ENCODE measurements at regions of chr3 and their contacts with region 1.

Region 1: GRCh38 chr3:171703756-171704401 is 106.4 kb downstream of the PLD1 start:
- DNase-seq: no peak
- H3K4me3 ChIP-seq: no peak overlapping the region
- H3K27ac ChIP-seq: no peak overlapping the region
- H3K4me1 ChIP-seq: no peaks in the 10 kb centered on the region
- H3K27me3 ChIP-seq: no peaks in the 10 kb centered on the region
- CTCF ChIP-seq: peak in 1 of 4 experiments; percentile 25
- EP300 ChIP-seq: no peak
- POLR2A ChIP-seq: no peak

Region 2: DNA sequence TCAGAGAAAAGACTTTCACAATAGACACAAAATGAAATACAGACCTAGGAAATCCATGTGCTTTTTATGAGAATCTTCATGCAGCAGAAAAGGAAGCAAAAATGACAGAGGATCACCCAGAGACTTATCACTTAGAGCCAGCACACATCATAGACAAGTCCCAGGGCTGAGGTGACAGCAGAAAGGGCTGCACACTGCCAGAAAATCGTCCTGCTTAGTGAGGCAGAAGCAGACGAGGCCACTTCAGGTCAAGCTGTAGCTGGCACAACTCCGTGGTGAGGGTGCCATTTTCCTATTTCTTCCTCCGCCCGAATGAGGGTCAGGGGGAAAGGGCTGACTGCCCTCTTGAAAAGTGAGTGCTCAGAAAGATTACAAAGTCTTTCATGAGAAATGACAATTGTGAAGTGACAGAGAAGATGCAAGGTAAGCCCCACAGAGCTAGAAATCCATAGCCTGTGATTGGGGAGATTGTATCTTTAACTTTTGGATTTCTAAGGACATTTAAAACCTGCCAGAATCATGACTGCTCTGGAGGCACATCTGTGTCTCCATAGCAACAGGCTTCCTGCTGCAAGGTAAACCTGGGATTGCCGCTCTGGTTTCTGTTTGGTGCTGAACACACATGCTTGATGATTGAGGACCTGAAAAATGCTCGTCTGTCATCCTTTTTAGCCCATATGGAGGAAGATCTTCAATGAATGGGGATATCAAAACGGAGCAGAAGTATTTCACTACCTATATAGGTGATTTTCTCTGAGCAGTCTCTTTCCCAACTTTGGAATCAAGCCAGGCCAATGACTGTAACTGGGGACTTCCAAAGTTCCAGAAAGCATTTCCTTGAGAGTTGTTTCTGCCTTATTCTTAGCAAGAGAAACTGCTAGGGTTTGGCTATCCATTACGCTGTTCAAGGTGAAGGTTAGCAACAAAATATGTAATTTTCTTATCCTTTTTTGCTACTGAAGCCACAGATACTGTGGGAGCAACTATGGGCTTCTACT is 147.4 kb before region 1 on chr3:
- intact Hi-C with region 1: no loop called
- DNase-seq: no peak
- H3K4me3 ChIP-seq: no peak overlapping the region
- H3K27ac ChIP-seq: no peak overlapping the region
- H3K4me1 ChIP-seq: no peaks in the 10 kb centered on the region
- H3K27me3 ChIP-seq: no peaks in the 10 kb centered on the region
- CTCF ChIP-seq: no peak
- EP300 ChIP-seq: no peak
- POLR2A ChIP-seq: no peak

Region 3: GRCh38 chr3:171829841-171830517 is 126.1 kb after region 1 on chr3:
- intact Hi-C with region 1: loop called (anchors 5 kb)
- DNase-seq: peak; percentile 89
- H3K4me3 ChIP-seq: no peak overlapping the region
- H3K27ac ChIP-seq: peak overlapping the region; percentile 35 to 54 (median 46)
- H3K4me1 ChIP-seq: peaks cover 0 to 23% (median 14%) of the 10 kb centered on the region in 4 donors
- H3K27me3 ChIP-seq: no peaks in the 10 kb centered on the region
- CTCF ChIP-seq: peak in 3 of 4 experiments; percentile 44 to 58 (median 49)
- EP300 ChIP-seq: no peak
- POLR2A ChIP-seq: no peak